PC-3 (cell line): ENCODE measurements at regions of chr4 and their contacts with region 1.

Region 1: GRCh38 chr4:30416547-30416946 is 303.6 kb upstream of the PCDH7 start:
- DNase-seq: no peak
- ATAC-seq: no peak
- H3K4me3 ChIP-seq: no peak overlapping the region
- H3K27ac ChIP-seq: no peak overlapping the region
- H3K4me1 ChIP-seq: no peaks in the 10 kb centered on the region
- H3K27me3 ChIP-seq: no peaks in the 10 kb centered on the region
- CTCF ChIP-seq: no peak

Region 2: DNA sequence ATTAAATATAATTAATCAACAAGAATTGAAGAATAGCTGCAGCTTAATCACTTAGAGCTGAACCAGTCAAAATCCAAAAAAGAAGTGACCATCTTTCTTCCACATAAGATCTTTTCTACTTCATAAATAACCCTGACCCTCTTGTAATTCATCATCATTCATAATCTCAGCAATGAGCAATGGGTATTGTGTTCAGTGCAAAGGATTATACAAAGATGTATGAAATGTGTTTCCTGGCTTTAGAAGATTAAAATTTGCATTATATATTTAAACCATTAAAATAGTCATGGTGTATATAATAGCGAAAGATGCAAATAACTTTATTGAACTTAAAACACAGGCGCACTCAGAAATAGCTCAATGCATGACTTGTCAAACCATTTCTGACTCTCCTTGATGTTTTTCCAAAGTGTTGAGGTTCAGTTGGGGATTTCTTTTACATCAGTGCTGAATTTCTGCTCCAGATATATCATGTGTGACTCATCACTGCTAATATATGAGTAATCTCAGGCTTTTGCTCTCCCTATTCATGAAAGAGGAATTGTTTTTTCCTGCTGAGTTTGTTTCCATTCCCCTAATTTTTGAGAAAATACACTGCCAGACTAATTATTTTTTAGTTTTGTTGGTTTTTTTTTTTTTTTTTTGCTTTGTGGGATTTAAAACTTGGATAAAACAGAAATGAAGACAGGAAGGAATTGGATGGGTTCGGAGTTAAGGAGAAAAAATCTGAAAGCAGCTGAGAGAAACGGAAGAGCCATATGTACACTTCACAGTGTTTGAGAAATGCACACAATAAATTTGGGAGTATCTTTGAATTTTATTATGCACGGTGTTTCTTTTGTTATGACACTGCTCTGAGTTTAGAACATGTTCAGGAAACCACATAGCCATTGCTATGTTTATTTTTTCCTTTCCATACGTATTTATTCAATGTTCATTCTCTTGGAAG is 13.5 kb after region 1 on chr4:
- CTCF ChIA-PET with region 1: no interaction called
- POLR2A ChIA-PET with region 1: interaction called, 12 read pairs
- intact Hi-C with region 1: no loop called
- DNase-seq: peak; percentile 77
- ATAC-seq: peak; percentile 92
- H3K4me3 ChIP-seq: peak overlapping the region; percentile 51; the same call in 1 of the 2 replicates
- H3K27ac ChIP-seq: peak overlapping the region; percentile 80
- H3K4me1 ChIP-seq: peaks cover 15% of the 10 kb centered on the region; the same call in 1 of the 2 replicates
- H3K27me3 ChIP-seq: no peaks in the 10 kb centered on the region
- CTCF ChIP-seq: no peak